Activated B cell treated with CpG ODN at 0.5 μM for 24 hours (primary cell): ENCODE measurements at regions of chr12 and their contacts with region 1.

Region 1: GRCh38 chr12:91382081-91382543 is 199.5 kb upstream of the DCN start:
- DNase-seq: peak; percentile 63
- ATAC-seq: peak; percentile 78
- H3K4me3 Mint-ChIP-seq: peak overlapping the region; percentile 76
- H3K27ac Mint-ChIP-seq: peak overlapping the region; percentile 35
- H3K4me1 Mint-ChIP-seq: peaks cover 4% of the 10 kb centered on the region
- H3K27me3 Mint-ChIP-seq: no peaks in the 10 kb centered on the region
- CTCF ChIP-seq: peak; percentile 62

Region 2: GRCh38 chr12:91189516-91189915 is 192.6 kb before region 1 on chr12:
- CTCF ChIA-PET with region 1: no interaction called
- POLR2A ChIA-PET with region 1: no interaction called
- intact Hi-C with region 1: no loop called
- DNase-seq: no peak
- ATAC-seq: no peak
- H3K4me3 Mint-ChIP-seq: no peak overlapping the region
- H3K27ac Mint-ChIP-seq: no peak overlapping the region
- H3K4me1 Mint-ChIP-seq: no peaks in the 10 kb centered on the region
- H3K27me3 Mint-ChIP-seq: peaks cover 2% of the 10 kb centered on the region
- CTCF ChIP-seq: no peak

Region 3: DNA sequence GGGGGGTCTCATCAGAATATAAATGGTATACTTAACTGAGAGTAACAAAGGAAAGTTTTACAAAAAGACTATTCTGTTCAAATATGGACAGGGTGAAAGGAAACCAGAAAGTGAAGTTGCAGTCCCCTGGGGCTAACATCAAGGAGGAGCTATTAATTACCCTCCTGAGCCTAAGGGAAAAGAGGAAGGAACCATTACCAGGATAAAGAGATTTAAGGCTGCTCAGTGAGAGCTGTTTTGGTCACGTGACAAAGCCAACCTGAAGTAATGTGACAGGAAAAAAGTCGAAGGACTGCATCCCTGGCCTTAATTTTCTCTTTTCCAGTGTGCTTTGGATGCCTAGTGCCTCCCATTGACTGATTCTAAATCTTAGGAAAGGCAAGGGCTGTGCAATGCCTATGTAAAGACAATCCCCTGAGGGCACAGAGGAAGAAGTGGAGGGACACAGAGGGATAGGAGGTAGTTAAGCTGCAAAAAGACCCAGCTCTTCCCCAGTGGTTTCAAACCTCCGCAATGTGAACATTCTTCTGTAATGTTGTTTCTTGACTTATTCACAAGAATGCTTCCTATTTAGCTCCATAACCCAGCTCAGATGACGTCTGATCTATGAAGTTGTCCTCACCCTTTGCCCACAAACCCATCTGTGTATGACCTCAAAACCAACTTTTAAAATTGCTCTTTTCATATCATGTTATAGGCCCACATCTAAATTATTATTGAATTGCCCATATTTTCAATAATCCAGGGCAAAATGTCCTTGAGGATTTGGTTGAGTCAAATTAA is 11.8 kb before region 1 on chr12:
- CTCF ChIA-PET with region 1: interaction called, 12 read pairs
- POLR2A ChIA-PET with region 1: no interaction called
- intact Hi-C with region 1: no loop called
- DNase-seq: no peak
- ATAC-seq: no peak
- H3K4me3 Mint-ChIP-seq: no peak overlapping the region
- H3K27ac Mint-ChIP-seq: no peak overlapping the region
- H3K4me1 Mint-ChIP-seq: no peaks in the 10 kb centered on the region
- H3K27me3 Mint-ChIP-seq: peaks cover 2% of the 10 kb centered on the region
- CTCF ChIP-seq: no peak

Region 4: DNA sequence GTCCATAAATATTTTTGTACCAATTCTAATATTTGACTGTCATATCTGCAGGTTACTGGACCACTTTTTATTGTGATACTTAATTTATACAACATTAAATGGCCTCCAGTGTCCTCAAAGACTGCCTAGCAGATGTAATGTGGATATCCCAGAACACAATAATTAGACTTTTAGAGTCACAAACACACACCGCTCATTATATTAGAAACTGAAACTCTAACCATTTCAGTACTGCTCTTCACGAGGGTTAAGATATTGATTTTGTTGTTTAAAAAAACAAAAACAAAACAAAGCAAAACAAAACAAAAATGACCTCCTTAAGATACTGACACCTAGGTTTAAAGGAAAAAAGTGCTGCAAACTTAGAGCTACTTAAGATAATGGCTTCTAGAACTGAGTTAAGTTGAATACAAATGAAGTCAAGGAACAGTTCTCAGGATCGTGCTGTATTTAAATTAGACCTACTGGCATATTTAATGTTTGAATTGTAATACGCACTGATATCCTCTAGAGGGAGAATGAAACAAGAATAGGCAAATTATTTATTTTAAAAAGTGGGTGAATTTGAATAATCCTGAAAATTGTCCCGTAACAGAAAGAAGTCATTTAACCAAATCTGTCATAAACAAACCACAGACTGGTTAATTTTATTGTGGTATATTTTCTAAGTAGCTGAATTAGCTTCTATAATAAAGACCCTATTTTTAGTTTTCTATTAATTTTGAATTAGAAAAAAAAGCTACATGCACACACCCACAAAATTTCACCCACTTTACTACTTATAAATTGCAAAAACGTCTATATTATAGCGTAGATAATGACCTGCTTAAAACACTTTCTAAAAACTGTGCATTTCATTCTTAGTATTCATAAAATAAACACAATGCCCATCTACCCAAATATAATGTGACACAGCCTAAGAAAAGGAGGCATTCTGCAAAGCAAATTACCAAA is 195.8 kb after region 1 on chr12:
- CTCF ChIA-PET with region 1: interaction called, 7 read pairs
- POLR2A ChIA-PET with region 1: no interaction called
- intact Hi-C with region 1: loop called (anchors 5 kb)
- DNase-seq: no peak
- ATAC-seq: peak; percentile 58
- H3K4me3 Mint-ChIP-seq: peak overlapping the region; percentile 70
- H3K27ac Mint-ChIP-seq: no peak overlapping the region
- H3K4me1 Mint-ChIP-seq: peaks cover 6% of the 10 kb centered on the region
- H3K27me3 Mint-ChIP-seq: peaks cover 7% of the 10 kb centered on the region
- CTCF ChIP-seq: peak; percentile 57

Region 5: GRCh38 chr12:91617830-91618702 is 236.0 kb after region 1 on chr12:
- CTCF ChIA-PET with region 1: no interaction called
- POLR2A ChIA-PET with region 1: no interaction called
- intact Hi-C with region 1: no loop called
- DNase-seq: no peak
- ATAC-seq: no peak
- H3K4me3 Mint-ChIP-seq: no peak overlapping the region
- H3K27ac Mint-ChIP-seq: no peak overlapping the region
- H3K4me1 Mint-ChIP-seq: no peaks in the 10 kb centered on the region
- H3K27me3 Mint-ChIP-seq: peaks cover 16% of the 10 kb centered on the region
- CTCF ChIP-seq: no peak

Region 6: DNA sequence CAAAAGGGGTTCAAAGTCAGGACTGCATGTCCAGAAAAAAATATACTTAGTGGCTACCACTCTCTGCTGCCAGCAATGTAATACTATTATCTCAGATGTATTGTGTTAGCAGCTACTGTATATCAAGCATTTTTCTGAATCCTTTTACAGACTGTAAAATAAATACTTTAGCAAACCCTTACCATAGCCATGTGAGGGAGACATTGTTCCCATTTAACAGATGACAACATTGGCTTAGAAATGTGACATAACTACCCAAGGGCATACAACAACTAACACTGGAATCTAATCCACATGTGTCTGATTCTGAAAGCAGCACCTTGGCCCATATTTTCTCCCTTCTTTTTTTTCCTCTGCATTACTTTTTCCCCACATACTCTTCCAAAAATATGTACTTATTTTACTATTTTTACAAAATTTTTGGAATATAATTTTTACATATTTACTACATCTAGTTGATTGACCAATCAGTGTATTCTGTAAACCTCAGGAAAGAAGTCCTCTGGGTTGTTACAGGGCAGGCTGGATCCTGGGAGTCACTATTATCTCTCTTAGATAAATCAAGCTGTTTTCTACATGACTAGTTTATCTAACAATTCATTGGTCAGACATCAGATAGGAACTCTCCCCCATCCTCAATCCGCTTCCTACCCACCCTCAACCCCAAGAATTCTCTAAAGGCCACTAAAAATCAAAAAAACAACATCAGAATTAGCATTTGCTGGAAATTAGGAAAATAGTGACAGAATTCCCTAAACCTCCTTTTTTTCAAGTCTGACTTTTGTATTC is 609.5 kb after region 1 on chr12:
- CTCF ChIA-PET with region 1: interaction called, 4 read pairs
- POLR2A ChIA-PET with region 1: no interaction called
- intact Hi-C with region 1: loop called (anchors 5 kb)
- DNase-seq: no peak
- ATAC-seq: peak; percentile 47
- H3K4me3 Mint-ChIP-seq: no peak overlapping the region
- H3K27ac Mint-ChIP-seq: no peak overlapping the region
- H3K4me1 Mint-ChIP-seq: peaks cover 2% of the 10 kb centered on the region
- H3K27me3 Mint-ChIP-seq: no peaks in the 10 kb centered on the region
- CTCF ChIP-seq: no peak

Region 7: DNA sequence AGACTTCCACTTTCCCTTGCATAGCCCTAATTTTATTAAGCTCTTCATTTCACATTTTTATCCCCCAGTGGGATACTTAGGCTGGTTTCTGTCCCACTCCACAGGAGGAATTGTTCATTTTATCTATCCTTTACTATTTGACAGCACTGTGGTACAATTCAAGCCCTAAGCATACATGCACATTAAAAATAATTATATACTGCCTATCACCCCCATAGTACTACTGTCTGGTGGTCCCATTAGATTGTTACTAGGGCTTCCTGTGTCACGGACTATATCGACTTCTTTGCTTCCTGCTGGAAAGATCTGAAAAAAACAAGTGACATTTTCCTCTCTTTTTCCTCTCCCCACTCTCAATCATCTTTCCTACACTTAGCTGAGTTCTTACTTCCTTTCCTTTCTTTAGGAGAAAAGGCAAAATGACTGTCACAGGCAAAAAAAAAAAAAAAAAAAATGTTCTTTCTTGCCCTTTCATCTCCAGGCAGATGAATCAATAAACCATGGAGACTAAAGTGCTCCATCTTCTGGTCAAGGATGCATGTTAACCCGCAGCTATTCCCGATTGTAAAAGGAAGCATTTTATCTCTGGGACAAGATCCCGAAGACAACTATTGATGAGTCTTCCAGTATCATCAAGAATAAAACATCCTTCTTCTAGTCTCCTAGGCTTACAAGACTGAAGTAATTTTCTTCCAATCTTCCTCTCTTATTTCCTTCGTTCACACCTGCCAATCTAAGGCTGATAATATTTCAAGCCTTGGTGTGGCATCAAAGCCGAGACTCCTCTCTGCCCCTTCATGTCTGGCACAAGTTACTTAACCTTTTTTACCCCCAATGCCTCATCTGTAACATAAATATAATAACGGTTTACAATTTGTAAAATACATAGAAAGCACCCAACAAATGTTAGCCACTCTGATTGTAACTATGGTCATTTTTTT is 1226.3 kb after region 1 on chr12:
- CTCF ChIA-PET with region 1: interaction called, 12 read pairs
- POLR2A ChIA-PET with region 1: no interaction called
- intact Hi-C with region 1: loop called (anchors 1 kb)
- DNase-seq: no peak
- ATAC-seq: no peak
- H3K4me3 Mint-ChIP-seq: peak overlapping the region; percentile 44
- H3K27ac Mint-ChIP-seq: no peak overlapping the region
- H3K4me1 Mint-ChIP-seq: peaks cover 9% of the 10 kb centered on the region
- H3K27me3 Mint-ChIP-seq: no peaks in the 10 kb centered on the region
- CTCF ChIP-seq: no peak

Region 8: GRCh38 chr12:92784795-92785562 is 1402.9 kb after region 1 on chr12:
- CTCF ChIA-PET with region 1: interaction called, 3 read pairs
- POLR2A ChIA-PET with region 1: no interaction called
- intact Hi-C with region 1: loop called (anchors 1 kb)
- DNase-seq: no peak
- ATAC-seq: peak; percentile 98
- H3K4me3 Mint-ChIP-seq: no peak overlapping the region
- H3K27ac Mint-ChIP-seq: no peak overlapping the region
- H3K4me1 Mint-ChIP-seq: no peaks in the 10 kb centered on the region
- H3K27me3 Mint-ChIP-seq: no peaks in the 10 kb centered on the region
- CTCF ChIP-seq: no peak